Stomach (tissue), 19 donors: ENCODE measurements at regions of chr21 and their contacts with region 1.

Region 1: GRCh38 chr21:42258153-42258884 is 39.4 kb downstream of the ABCG1 start:
- DNase-seq: peak; percentile 79 to 84
- H3K4me3 ChIP-seq: no peak overlapping the region
- H3K27ac ChIP-seq: no peak overlapping the region
- H3K4me1 ChIP-seq: peaks cover 8 to 51% (median 35%) of the 10 kb centered on the region in 4 donors
- H3K27me3 ChIP-seq: no peaks in the 10 kb centered on the region
- CTCF ChIP-seq: peak in 5 of 7 experiments; percentile 73 to 87 (median 84)
- EP300 ChIP-seq: no peak
- POLR2A ChIP-seq: no peak

Region 2: GRCh38 chr21:41653954-41654491 is 604.3 kb before region 1 on chr21:
- intact Hi-C with region 1: no loop called
- DNase-seq: no peak
- H3K4me3 ChIP-seq: no peak overlapping the region
- H3K27ac ChIP-seq: no peak overlapping the region
- H3K4me1 ChIP-seq: peaks cover 0 to 24% (median 11%) of the 10 kb centered on the region in 4 donors
- H3K27me3 ChIP-seq: no peaks in the 10 kb centered on the region
- CTCF ChIP-seq: no peak
- EP300 ChIP-seq: no peak
- POLR2A ChIP-seq: no peak

Region 3: GRCh38 chr21:42145569-42146272 is 112.6 kb before region 1 on chr21:
- intact Hi-C with region 1: loop called (anchors 5 kb)
- DNase-seq: peak; percentile 59 to 87
- H3K4me3 ChIP-seq: no peak overlapping the region
- H3K27ac ChIP-seq: no peak overlapping the region
- H3K4me1 ChIP-seq: peaks cover 0 to 6% (median 4%) of the 10 kb centered on the region in 4 donors
- H3K27me3 ChIP-seq: peaks cover 0 to 8% (median 0%) of the 10 kb centered on the region in 3 donors
- CTCF ChIP-seq: peak in 5 of 7 experiments; percentile 92 to 96 (median 95)
- EP300 ChIP-seq: no peak
- POLR2A ChIP-seq: no peak

Region 4: GRCh38 chr21:42164064-42164789 is 94.1 kb before region 1 on chr21:
- intact Hi-C with region 1: loop called (anchors 5 kb)
- DNase-seq: peak; percentile 78 to 83
- H3K4me3 ChIP-seq: no peak overlapping the region
- H3K27ac ChIP-seq: no peak overlapping the region
- H3K4me1 ChIP-seq: peaks cover 0 to 11% (median 6%) of the 10 kb centered on the region in 4 donors
- H3K27me3 ChIP-seq: peaks cover 0 to 5% (median 0%) of the 10 kb centered on the region in 3 donors
- CTCF ChIP-seq: peak in 5 of 7 experiments; percentile 26 to 73 (median 42)
- EP300 ChIP-seq: no peak
- POLR2A ChIP-seq: no peak

Region 5: DNA sequence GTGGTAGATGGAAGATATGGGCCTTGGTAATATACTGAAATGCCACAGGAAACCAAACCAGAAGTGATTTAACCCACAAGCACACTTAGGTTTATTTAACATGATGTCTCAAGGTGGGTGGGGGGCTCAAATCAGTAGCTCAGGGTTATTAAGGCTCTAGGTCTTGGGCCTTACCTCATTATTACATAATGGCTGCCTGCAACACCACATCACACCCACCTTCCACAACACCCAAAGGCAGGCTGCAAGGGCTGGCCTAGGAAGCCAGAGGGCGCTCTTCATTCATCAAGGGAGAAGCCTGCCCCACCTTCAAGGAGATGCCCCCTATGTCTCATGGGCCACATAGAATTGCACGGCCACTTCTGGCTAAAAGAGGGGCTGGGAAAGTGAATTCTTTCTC is 102.0 kb after region 1 on chr21:
- intact Hi-C with region 1: no loop called
- DNase-seq: no peak
- H3K4me3 ChIP-seq: no peak overlapping the region
- H3K27ac ChIP-seq: peak overlapping the region in 1 of 5 donors; percentile 14
- H3K4me1 ChIP-seq: peaks cover 0 to 10% (median 4%) of the 10 kb centered on the region in 4 donors
- H3K27me3 ChIP-seq: peaks cover 0 to 70% (median 0%) of the 10 kb centered on the region in 3 donors
- CTCF ChIP-seq: peak in 1 of 7 experiments; percentile 22
- EP300 ChIP-seq: no peak
- POLR2A ChIP-seq: no peak